Mucosa of descending colon (tissue), 3 donors: ENCODE measurements at regions of chr20 and their contacts with region 1.

Region 1: DNA sequence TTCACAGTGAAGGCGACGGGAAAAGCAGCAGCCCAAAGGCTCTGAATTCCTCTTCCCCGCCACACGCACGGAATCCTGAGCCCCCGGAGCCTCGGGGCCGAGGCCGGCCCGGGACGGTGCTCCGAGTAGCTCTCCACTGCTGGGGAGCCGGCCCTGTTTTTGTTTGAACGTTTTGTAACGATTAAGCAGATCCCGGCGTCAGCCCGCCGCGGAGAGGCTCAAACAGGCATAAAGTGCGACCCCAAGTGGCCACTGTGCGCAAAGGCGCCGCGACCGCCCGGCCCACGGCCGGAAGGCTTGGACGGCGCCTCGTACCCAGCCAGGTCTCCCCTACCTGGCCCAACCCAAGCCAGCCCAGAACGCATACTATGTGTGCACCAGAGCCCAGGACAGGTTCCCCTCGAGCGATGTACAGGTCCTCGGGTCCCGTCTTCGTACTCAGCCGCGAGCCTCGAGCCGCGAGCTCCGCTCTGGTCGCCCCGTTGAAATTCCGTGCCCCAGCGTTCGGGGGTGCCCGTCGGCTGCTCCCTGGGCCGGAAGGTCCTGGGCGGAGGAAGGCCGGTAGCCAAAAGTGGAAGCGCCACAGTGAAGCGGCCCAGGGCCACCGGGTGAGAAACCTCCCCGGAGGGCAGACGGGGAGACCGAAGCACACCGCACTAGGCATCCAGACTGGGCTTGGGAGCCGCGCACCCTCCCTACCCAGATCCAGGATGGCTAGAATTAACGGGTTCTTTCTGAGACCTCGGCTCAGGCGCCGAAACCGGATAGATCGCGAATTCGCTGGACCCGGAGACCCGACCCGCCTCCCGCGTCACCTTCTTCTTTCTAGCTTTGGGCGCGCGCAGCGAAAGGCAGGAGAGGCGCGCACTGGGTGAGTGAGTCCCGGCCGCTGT is 1.2 kb upstream of the MAFB start:
- DNase-seq: peak; percentile 85 to 92 (median 91)
- ATAC-seq: peak; percentile 76
- H3K4me3 ChIP-seq: no peak overlapping the region
- H3K4me1 ChIP-seq: peaks cover 17% of the 10 kb centered on the region
- CTCF ChIP-seq: peak; percentile 76

Region 2: DNA sequence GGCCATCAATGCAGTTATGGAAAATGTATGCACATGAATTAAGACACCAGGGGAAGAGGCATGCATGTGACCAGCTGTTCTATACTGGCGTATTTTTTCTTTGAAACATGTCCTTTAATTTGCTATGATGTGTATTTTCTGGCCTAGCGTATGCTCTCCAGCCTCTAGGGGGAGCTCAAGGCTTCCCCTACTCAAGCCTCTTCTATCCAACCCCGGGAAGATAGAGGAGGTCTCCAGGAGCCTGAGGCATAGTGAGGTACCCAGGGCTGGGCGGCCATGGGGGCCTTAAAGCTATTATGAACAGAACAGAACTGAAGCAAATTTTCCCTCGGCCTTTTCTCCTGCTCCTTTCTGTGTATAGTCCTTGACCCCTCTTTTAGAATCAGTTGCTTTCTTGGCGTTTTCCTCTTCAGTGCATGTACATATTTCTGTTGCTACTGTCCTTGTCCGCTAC is 530.1 kb before region 1 on chr20:
- intact Hi-C with region 1: loop called in 1 of 2 experiments (anchors 10 kb)
- DNase-seq: peak in 2 of 3 donors; percentile 23 to 66
- ATAC-seq: peak; percentile 72
- H3K4me3 ChIP-seq: no peak overlapping the region
- H3K4me1 ChIP-seq: no peaks in the 10 kb centered on the region
- CTCF ChIP-seq: no peak

Region 3: DNA sequence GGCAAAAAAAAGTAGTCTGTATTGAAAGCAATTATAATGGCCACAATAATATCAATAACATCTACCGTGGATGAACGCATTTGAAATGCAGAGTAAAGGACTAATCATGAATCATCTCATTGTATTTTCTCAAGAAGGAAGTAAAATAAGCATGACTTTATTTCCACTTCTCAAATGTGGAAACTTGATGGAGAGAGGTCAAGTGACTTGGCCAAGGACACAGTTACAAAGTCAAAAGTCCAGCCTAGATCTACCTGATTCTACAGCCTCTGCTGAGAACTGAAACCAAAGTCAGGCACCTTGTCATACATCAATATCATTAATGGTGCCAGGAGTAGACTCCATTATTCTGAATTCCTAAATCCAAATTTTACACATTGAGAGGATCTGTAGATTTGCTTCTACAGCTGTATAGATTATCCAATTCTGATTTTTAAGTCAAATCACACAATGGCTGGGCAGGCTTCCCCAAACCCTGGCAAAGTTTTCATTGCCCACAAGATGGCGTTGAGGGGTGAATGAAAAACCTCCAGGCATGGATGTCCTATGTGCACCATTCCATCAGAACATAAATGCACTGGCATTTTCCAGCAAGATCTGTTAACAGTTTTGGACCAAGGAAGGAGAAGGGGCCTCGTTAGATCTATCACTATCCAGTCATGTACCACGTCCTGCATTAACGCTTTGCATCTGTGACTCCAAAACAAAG is 424.2 kb before region 1 on chr20:
- intact Hi-C with region 1: loop called in 1 of 2 experiments (anchors 10 kb)
- DNase-seq: peak in 2 of 3 donors; percentile 36 to 64
- ATAC-seq: peak; percentile 57
- H3K4me3 ChIP-seq: no peak overlapping the region
- H3K4me1 ChIP-seq: no peaks in the 10 kb centered on the region
- CTCF ChIP-seq: no peak

Region 4: GRCh38 chr20:40643891-40644290 is 46.3 kb before region 1 on chr20:
- intact Hi-C with region 1: no loop called
- DNase-seq: no peak
- ATAC-seq: no peak
- H3K4me3 ChIP-seq: no peak overlapping the region
- H3K4me1 ChIP-seq: no peaks in the 10 kb centered on the region
- CTCF ChIP-seq: no peak

Region 5: GRCh38 chr20:40728470-40728869 is 38.3 kb after region 1 on chr20:
- intact Hi-C with region 1: no loop called
- DNase-seq: no peak
- ATAC-seq: no peak
- H3K4me3 ChIP-seq: no peak overlapping the region
- H3K4me1 ChIP-seq: no peaks in the 10 kb centered on the region
- CTCF ChIP-seq: no peak